Activated CD4-positive, alpha-beta T cell treated with anti-CD3 and anti-CD28 coated beads, Interleukin-2, amount 10 ng/mL, durations not matched to agents 24 days and 14 days (primary cell): ENCODE measurements at regions of chr3 and their contacts with region 1.

Region 1: DNA sequence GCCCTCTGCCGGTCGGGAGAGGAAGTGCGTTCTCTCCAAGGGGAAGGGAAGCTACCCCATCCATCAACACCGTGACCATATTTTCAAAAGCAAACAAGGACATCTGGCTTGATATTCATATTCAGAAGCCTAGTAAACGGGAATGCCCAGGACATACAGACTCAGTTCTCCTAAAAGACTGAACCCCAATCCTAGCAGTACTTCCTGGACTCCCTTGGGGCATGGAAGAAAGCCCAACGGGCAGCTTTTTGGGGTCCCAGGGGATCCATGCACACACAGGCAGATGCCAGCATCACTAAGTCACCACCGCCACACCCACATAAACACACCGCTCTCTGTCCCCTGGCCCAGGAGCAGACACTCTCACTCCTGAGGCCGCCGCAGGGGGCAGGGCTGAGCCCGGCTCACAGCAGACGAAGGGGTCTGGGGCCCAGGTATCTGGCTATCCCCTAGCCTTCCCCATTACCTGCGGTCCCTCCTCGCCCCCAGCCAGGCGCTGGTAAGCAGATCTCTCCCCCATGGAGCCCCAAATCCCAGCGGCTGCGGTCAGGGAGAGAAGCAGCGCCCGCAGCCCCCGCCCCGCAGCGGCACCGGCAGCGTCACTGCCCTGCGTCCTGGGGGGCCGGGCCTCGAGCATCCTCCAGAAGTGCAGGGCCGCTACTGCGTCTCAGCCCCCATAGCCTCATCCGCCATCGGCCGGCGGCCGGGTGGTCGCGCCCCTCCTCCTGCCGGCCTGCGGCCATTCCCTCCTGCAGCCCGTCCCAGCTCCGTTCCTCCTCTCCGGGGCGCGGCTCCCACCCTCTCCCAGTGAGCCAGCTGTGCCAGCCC is 13.4 kb downstream of the TNK2 start:
- DNase-seq: peak; percentile 91
- H3K4me3 Mint-ChIP-seq: peak overlapping the region; percentile 85
- H3K27ac Mint-ChIP-seq: peak overlapping the region; percentile 95
- H3K4me1 Mint-ChIP-seq: peaks cover 39% of the 10 kb centered on the region
- H3K27me3 Mint-ChIP-seq: no peaks in the 10 kb centered on the region

Region 2: GRCh38 chr3:194556086-194557056 is 1338.6 kb before region 1 on chr3:
- intact Hi-C with region 1: no loop called
- DNase-seq: peak; percentile 68
- H3K4me3 Mint-ChIP-seq: peak overlapping the region; percentile 49
- H3K27ac Mint-ChIP-seq: peak overlapping the region; percentile 52
- H3K4me1 Mint-ChIP-seq: peaks cover 8% of the 10 kb centered on the region
- H3K27me3 Mint-ChIP-seq: peaks cover 6% of the 10 kb centered on the region

Region 3: DNA sequence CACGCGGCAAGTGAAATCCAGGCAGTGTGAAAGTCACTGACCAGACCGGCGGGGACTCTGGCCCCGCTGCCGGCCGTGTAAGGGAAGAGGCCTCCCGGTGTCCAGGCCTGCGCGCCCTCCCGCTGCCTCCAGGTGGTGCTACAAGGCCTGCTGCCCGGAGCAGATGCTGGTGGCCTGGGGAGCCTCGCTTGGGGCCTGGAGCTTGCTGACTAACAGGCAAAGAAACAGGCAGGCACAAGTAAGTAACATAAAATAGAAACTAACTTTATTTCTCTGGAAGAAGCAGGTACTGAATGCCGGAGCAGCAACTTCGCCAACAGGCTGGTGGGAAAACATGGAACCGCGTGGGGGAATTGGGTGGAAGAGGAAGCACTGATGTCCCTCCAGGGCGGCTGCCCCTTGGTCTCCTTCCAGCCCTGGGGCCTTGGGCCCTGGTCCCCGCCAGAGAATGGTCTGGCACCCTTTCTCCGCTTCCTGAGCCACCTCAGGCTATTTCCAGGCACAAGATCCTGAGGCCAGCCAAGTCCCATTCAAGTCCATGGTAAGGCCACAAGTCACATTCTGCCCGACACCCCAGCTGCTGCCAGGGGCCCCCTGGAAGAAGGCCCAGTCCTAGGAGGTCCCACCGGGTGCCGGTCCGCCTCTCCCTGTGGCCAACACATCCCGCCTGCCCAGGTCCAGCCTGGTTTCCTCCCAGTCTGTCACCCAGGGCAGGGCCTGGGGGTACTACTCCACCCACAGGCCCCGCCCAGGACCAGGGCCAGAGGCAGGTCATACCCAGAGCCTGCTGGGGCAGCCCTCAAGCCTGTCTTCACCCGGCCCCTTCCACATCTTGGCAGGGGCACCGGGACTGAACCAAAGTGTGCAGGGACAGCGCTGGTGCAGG is 31.6 kb before region 1 on chr3:
- intact Hi-C with region 1: loop called (anchors 1 kb)
- DNase-seq: peak; percentile 89
- H3K4me3 Mint-ChIP-seq: no peak overlapping the region
- H3K27ac Mint-ChIP-seq: no peak overlapping the region
- H3K4me1 Mint-ChIP-seq: peaks cover 6% of the 10 kb centered on the region
- H3K27me3 Mint-ChIP-seq: peaks cover 2% of the 10 kb centered on the region